Sigmoid colon (tissue), 7 donors: ENCODE measurements at regions of chr1 and their contacts with region 1.

Region 1: DNA sequence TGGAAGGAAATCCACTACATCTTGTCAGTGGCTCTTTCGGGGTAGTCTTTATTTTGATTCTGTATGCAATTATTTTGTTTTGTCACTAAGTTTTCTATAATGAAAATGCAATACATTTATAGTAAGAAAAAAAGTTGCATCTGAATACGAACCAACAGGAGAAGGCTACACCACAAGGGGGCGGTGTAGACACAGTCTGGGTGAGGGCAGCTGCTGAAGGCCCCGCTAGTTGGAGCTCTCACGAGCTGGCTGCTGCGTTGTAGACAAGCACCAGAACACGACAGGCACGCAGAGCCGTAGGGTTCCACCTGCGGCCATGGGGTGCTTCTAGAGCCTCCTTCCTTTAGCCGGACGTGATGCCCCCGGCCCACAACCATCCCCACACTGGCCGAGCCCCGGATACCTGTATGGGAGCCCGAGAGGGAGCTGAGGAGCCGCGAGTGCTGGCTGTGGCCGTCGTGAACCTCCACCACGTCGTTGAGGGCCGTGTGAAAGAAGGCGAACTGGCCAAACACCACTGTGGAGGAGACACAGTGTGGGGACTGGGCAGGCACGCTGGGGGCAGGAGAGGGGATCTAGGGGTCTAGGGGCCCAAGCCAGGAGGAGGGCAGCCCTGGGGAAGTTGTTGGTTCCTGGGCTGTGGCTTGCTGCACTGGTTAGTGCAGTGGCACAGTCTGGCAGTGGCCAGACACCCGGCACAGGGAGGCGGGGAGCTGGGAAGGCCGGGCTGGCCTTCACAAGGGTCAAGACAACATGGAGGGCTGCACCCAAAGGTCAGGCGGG is 160.8 kb downstream of the ZSCAN20 start:
- DNase-seq: peak; percentile 92
- H3K4me3 ChIP-seq: no peak overlapping the region
- H3K27ac ChIP-seq: no peak overlapping the region
- H3K4me1 ChIP-seq: peaks cover 0 to 3% (median 0%) of the 10 kb centered on the region in 4 donors
- H3K27me3 ChIP-seq: peaks cover 0 to 6% (median 0%) of the 10 kb centered on the region in 3 donors
- CTCF ChIP-seq: peak; percentile 60 to 94 (median 86)
- EP300 ChIP-seq: no peak
- POLR2A ChIP-seq: no peak

Region 2: GRCh38 chr1:33698361-33699035 is 65.3 kb after region 1 on chr1:
- intact Hi-C with region 1: no loop called
- DNase-seq: no peak
- H3K4me3 ChIP-seq: no peak overlapping the region
- H3K27ac ChIP-seq: no peak overlapping the region
- H3K4me1 ChIP-seq: no peaks in the 10 kb centered on the region
- H3K27me3 ChIP-seq: no peaks in the 10 kb centered on the region
- CTCF ChIP-seq: no peak
- EP300 ChIP-seq: no peak
- POLR2A ChIP-seq: no peak

Region 3: GRCh38 chr1:33815058-33815457 is 181.8 kb after region 1 on chr1:
- intact Hi-C with region 1: no loop called
- DNase-seq: no peak
- H3K4me3 ChIP-seq: no peak overlapping the region
- H3K27ac ChIP-seq: no peak overlapping the region
- H3K4me1 ChIP-seq: no peaks in the 10 kb centered on the region
- H3K27me3 ChIP-seq: no peaks in the 10 kb centered on the region
- CTCF ChIP-seq: no peak
- EP300 ChIP-seq: no peak
- POLR2A ChIP-seq: no peak

Region 4: DNA sequence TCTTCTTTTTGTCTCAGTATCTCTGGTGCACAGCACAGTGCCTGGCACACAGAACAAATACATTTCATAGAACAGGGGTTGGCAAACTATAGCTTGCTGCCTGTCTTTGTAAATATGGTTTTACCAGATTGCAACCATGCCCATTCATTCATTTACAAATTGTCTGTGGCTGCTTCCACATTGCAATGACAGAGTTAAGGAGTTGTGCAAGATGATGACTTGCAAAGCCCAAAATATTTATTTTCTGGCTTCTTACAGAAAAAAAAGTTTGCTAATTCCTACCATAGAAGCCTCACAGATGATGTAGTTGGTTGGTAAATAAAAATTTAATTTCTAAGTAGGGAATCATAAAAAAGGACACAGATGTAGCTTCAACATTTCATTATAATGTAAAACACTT is 219.5 kb after region 1 on chr1:
- intact Hi-C with region 1: no loop called
- DNase-seq: no peak
- H3K4me3 ChIP-seq: no peak overlapping the region
- H3K27ac ChIP-seq: no peak overlapping the region
- H3K4me1 ChIP-seq: no peaks in the 10 kb centered on the region
- H3K27me3 ChIP-seq: peaks cover 0 to 17% (median 0%) of the 10 kb centered on the region in 3 donors
- CTCF ChIP-seq: no peak
- EP300 ChIP-seq: no peak
- POLR2A ChIP-seq: no peak

Region 5: GRCh38 chr1:34162852-34163766 is 529.9 kb after region 1 on chr1:
- intact Hi-C with region 1: loop called (anchors 2 kb)
- DNase-seq: peak; percentile 79
- H3K4me3 ChIP-seq: peak overlapping the region; percentile 12 to 50 (median 44)
- H3K27ac ChIP-seq: no peak overlapping the region
- H3K4me1 ChIP-seq: peaks cover 0 to 46% (median 44%) of the 10 kb centered on the region in 4 donors
- H3K27me3 ChIP-seq: peaks cover 24 to 77% (median 67%) of the 10 kb centered on the region in 3 donors
- CTCF ChIP-seq: peak; percentile 34 to 58 (median 44)
- EP300 ChIP-seq: no peak
- POLR2A ChIP-seq: no peak

Region 6: DNA sequence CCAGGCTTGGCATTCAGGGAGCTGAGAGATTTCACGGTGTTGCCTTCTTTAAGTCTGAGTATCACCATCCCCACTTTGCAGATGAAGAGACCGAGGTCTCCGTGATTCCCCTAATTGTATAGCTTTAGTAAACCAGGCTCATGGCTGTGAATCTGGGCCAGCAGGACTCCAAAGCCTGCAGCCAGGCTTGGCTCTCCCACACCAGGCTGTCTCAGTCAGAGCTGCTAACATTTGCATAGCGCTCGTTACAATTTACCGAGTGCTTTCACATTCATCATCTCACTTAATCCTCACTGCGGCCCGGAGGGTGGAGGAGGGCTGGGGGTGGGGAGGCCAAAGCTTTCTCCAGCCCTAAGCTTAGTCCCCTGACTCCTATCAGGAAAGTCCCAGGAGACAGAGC is 555.2 kb after region 1 on chr1:
- intact Hi-C with region 1: no loop called
- DNase-seq: peak; percentile 21
- H3K4me3 ChIP-seq: no peak overlapping the region
- H3K27ac ChIP-seq: no peak overlapping the region
- H3K4me1 ChIP-seq: no peaks in the 10 kb centered on the region
- H3K27me3 ChIP-seq: peaks cover 0 to 28% (median 0%) of the 10 kb centered on the region in 3 donors
- CTCF ChIP-seq: no peak
- EP300 ChIP-seq: no peak
- POLR2A ChIP-seq: no peak

Region 7: GRCh38 chr1:34603594-34603993 is 970.4 kb after region 1 on chr1:
- intact Hi-C with region 1: loop called (anchors 10 kb)
- DNase-seq: no peak
- H3K4me3 ChIP-seq: no peak overlapping the region
- H3K27ac ChIP-seq: no peak overlapping the region
- H3K4me1 ChIP-seq: no peaks in the 10 kb centered on the region
- H3K27me3 ChIP-seq: peaks cover 0 to 10% (median 0%) of the 10 kb centered on the region in 3 donors
- CTCF ChIP-seq: no peak
- EP300 ChIP-seq: no peak
- POLR2A ChIP-seq: no peak

Region 8: GRCh38 chr1:34742667-34743270 is 1109.6 kb after region 1 on chr1:
- intact Hi-C with region 1: loop called (anchors 2 kb)
- DNase-seq: peak; percentile 71
- H3K4me3 ChIP-seq: no peak overlapping the region
- H3K27ac ChIP-seq: no peak overlapping the region
- H3K4me1 ChIP-seq: peaks cover 0 to 7% (median 3%) of the 10 kb centered on the region in 4 donors
- H3K27me3 ChIP-seq: peaks cover 0 to 24% (median 5%) of the 10 kb centered on the region in 3 donors
- CTCF ChIP-seq: peak; percentile 37 to 97 (median 74)
- EP300 ChIP-seq: no peak
- POLR2A ChIP-seq: no peak